ENCODE measurements at regions of chr7 and their contacts with region 1.

Region 1: DNA sequence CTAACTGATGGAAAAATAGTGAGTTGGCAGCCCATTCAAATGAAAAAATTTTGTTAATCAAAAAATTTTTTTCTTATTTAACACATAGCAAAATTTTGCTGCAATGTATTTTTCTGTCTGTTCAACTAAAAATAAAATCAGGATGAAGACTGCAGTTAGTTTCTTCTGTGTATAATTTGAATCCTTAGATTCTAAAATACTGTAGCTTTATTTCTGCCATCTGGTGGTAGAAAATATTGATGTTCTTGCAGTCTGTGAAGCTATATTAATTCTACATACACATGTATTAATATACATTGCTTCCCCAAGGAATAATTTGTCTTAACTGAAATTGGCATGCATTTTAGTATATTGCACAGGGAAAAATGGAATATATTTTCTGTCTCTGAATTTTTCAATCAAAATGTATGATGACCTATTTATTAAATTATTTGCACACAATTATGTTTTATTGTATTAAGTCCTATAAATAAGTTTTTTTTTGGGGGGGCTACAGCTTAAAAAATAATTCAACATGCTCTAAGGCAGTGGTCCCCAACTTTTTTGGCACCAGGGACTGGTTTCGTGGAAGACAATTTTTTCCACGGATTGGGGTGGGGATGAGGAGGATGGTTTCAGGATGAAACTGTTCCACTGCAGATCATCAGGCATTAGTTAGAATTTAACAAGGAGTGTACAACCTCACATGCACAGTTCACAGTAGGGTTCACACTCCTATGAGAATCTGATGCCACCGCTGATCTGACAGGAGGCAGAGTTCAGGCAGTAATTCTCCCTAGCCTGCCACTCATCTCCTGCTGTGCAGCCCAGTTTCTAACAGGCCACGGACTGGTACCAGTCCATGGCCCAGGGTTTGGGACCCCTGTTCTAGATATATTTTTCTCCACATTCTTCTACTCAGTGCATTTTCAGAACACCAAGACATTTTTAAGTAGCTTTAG is 119.4 kb downstream of the GNAT3 start:
- DNase-seq: no peak
- ATAC-seq: no peak
- H3K4me3 ChIP-seq: no peak overlapping the region
- H3K27ac ChIP-seq: no peak overlapping the region
- H3K4me1 ChIP-seq: no peaks in the 10 kb centered on the region
- H3K27me3 ChIP-seq: no peaks in the 10 kb centered on the region
- CTCF ChIP-seq: peak; percentile 15 to 78 (median 62)

Region 2: DNA sequence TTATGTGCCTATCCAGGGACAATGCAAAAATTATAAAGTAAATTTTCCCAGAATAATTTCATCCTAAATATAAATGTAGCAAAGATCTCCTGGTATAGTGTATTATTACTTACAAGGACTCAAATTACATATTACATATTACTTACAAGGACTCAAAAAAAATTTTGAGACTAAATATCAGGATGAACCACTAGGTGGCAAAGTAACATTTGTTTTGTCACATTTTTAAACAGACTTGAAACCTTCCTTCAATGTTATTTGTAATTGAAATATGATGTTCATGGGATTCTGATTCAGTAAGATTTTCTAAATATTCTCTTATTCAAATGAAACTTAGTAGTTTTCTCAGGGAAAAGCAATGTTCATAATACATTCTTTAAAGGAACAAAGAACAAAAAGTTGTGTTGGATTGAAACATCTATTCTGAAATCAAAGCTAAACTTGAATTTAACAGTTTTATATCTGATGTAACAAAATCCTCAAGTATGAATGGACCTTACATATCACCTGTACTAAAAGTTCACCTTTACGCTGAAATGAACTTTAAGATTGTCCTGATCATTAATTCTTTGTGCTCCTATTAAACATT is 332.2 kb before region 1 on chr7:
- intact Hi-C with region 1: loop called in 8 of 10 experiments (anchors 2 to 10 kb)
- DNase-seq: no peak
- ATAC-seq: no peak
- H3K4me3 ChIP-seq: no peak overlapping the region
- H3K27ac ChIP-seq: no peak overlapping the region
- H3K4me1 ChIP-seq: no peaks in the 10 kb centered on the region
- H3K27me3 ChIP-seq: no peaks in the 10 kb centered on the region
- CTCF ChIP-seq: peak in 8 of 9 donors; percentile 32 to 68 (median 57)

Region 3: GRCh38 chr7:80095545-80095944 is 297.0 kb before region 1 on chr7:
- intact Hi-C with region 1: loop called in 7 of 10 experiments (anchors 2 to 10 kb)
- DNase-seq: no peak
- ATAC-seq: no peak
- H3K4me3 ChIP-seq: no peak overlapping the region
- H3K27ac ChIP-seq: no peak overlapping the region
- H3K4me1 ChIP-seq: no peaks in the 10 kb centered on the region
- H3K27me3 ChIP-seq: no peaks in the 10 kb centered on the region
- CTCF ChIP-seq: peak; percentile 16 to 66 (median 53)

Region 4: GRCh38 chr7:80335511-80336231 is 56.8 kb before region 1 on chr7:
- intact Hi-C with region 1: loop called in 2 of 10 experiments (anchors 10 kb)
- DNase-seq: no peak
- ATAC-seq: peak in 6 of 8 donors; percentile 43 to 82 (median 66)
- H3K4me3 ChIP-seq: no peak overlapping the region
- H3K27ac ChIP-seq: peak overlapping the region in 8 of 10 donors; percentile 7 to 47 (median 29)
- H3K4me1 ChIP-seq: peaks cover 0 to 25% (median 10%) of the 10 kb centered on the region in 9 donors
- H3K27me3 ChIP-seq: no peaks in the 10 kb centered on the region
- CTCF ChIP-seq: no peak

Region 5: DNA sequence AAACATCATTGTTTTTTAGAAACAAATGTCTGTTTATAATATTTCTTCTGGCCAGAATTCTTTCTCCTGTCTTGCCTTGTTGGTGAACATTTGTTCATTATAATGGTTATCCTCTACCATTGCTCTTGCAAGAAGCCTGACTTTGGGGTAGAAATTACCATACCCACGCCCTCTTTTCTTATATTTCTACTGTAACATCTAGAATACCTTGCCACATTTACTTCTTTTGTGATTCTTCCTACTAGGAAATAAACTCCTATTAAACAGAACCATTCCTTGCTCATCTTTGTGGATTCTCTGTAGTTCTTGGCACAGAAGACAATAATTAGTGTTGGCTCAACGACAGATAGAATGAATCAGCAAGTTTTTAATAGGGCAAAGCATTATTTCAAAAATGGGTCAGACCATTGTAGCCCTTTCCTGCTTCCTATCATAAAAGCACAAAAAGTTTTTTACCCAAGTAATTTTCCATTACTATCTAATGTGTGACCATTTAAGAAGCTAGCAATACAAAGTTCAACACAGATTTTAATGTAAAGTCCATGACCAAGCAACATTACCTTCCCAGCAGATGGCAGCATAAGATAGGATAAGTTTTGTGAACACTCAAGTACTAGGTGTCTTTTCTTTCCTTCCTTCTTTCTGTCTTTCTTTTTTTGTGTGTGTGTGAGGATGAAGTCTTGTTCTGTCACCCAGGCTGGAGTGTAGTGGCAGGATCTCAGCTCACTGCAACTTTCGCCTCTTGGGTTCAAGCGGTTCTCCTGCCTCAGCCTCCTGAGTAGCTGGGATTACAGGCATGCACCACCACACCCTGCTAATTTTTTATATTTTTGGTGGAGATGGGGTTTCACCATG is 1107.0 kb after region 1 on chr7:
- intact Hi-C with region 1: no loop called
- DNase-seq: peak in 1 of 2 donors; percentile 45
- ATAC-seq: peak; percentile 59 to 87 (median 81)
- H3K4me3 ChIP-seq: no peak overlapping the region
- H3K27ac ChIP-seq: peak overlapping the region in 4 of 10 donors; percentile 16 to 57 (median 38)
- H3K4me1 ChIP-seq: peaks cover 0 to 16% (median 12%) of the 10 kb centered on the region in 9 donors
- H3K27me3 ChIP-seq: no peaks in the 10 kb centered on the region
- CTCF ChIP-seq: peak; percentile 19 to 79 (median 60)

Measured in heart right ventricle (tissue), 16 donors.